B cell (primary cell): ENCODE measurements at regions of chr5 and their contacts with region 1.

Region 1: GRCh38 chr5:119411935-119412602 is 40.2 kb upstream of the HSD17B4 start:
- DNase-seq: peak; percentile 85
- ATAC-seq: peak; percentile 74
- H3K4me3 ChIP-seq: peak overlapping the region; percentile 50 to 79 (median 70)
- H3K4me3 Mint-ChIP-seq: peak overlapping the region; percentile 91
- H3K27ac ChIP-seq: peak overlapping the region; percentile 55 to 67
- H3K27ac Mint-ChIP-seq: peak overlapping the region; percentile 88
- H3K4me1 ChIP-seq: peaks cover 62 to 65% of the 10 kb centered on the region in 2 donors
- H3K4me1 Mint-ChIP-seq: peaks cover 75% of the 10 kb centered on the region
- H3K27me3 ChIP-seq: no peaks in the 10 kb centered on the region
- H3K27me3 Mint-ChIP-seq: no peaks in the 10 kb centered on the region
- CTCF ChIP-seq: peak; percentile 94

Region 2: DNA sequence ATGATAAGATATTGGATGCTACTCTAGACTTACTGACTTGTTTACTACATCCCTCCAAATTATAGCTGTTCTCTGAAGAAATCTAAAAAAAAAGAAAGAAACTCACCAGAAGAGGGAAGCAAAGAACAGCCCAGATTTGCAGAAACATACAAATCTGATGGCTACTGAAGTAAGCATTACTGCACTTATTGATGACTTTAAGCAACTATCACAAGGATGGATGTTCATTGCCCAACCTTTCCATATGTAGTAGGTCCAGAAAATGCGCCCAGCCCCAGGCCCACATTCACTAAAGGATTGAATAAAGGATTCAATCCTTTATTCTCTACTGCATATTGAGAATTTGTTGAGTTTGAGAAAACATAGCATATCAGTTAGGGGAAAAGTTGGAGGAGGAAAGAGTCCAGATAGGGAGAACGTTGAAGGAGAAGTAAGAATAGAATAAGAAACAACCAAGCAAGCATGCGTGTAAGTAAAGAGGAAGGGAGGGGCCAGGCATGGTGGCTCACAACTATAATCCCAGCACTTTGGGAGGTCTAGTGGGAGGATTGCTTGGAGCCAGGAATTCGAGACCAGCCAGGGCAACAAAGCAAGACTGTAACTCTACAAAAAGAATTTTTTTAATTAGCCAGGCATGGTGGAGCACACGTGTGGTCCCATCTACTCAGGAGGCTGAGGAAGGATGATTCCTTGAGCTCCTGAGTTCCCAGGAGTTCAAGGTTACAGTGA is 389.9 kb before region 1 on chr5:
- CTCF ChIA-PET with region 1: interaction called, 58 read pairs
- POLR2A ChIA-PET with region 1: no interaction called
- intact Hi-C with region 1: loop called (anchors 2 kb)
- DNase-seq: peak; percentile 68
- ATAC-seq: peak; percentile 62
- H3K4me3 ChIP-seq: peak overlapping the region in 1 of 5 experiments; percentile 7
- H3K4me3 Mint-ChIP-seq: peak overlapping the region; percentile 40
- H3K27ac ChIP-seq: peak overlapping the region; percentile 30 to 78
- H3K27ac Mint-ChIP-seq: peak overlapping the region; percentile 82
- H3K4me1 ChIP-seq: peaks cover 64 to 67% of the 10 kb centered on the region in 2 donors
- H3K4me1 Mint-ChIP-seq: peaks cover 65% of the 10 kb centered on the region
- H3K27me3 ChIP-seq: no peaks in the 10 kb centered on the region
- H3K27me3 Mint-ChIP-seq: no peaks in the 10 kb centered on the region
- CTCF ChIP-seq: peak; percentile 67

Region 3: GRCh38 chr5:119187776-119188529 is 224.1 kb before region 1 on chr5:
- CTCF ChIA-PET with region 1: no interaction called
- POLR2A ChIA-PET with region 1: no interaction called
- intact Hi-C with region 1: no loop called
- DNase-seq: peak; percentile 40
- ATAC-seq: no peak
- H3K4me3 ChIP-seq: peak overlapping the region in 3 of 5 experiments; percentile 22 to 37 (median 24)
- H3K4me3 Mint-ChIP-seq: peak overlapping the region; percentile 73
- H3K27ac ChIP-seq: peak overlapping the region; percentile 39 to 71
- H3K27ac Mint-ChIP-seq: peak overlapping the region; percentile 80
- H3K4me1 ChIP-seq: peaks cover 12 to 15% of the 10 kb centered on the region in 2 donors
- H3K4me1 Mint-ChIP-seq: peaks cover 26% of the 10 kb centered on the region
- H3K27me3 ChIP-seq: no peaks in the 10 kb centered on the region
- H3K27me3 Mint-ChIP-seq: no peaks in the 10 kb centered on the region
- CTCF ChIP-seq: no peak

Region 4: DNA sequence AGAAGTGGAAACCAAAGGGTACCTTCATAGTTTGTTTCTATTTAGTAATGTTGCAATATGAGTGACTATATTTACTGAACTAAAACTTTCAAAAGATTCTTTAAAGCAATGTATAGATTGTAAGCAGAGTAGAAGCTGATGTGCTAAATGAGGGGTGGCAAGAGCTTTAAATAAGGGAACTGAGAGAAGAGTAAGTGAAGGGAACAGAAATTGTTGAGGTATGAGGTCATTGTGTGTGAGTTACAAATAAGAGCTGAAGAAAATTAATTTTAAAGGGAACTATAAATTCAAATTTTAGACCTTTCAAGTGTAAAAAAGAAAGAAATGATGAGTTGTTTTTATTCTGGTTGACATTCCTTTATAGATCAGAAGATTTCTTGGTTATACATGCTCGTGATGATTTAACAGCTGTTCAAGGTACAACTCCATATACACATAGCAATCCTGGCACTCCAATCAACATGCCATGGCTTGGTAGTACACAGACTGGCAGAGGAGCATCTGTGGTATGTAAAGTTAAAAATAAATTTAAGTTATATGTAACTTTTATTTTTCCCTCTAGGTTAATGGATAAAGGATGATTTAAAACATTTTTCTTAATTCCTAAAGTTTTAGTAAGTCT is 191.4 kb before region 1 on chr5:
- CTCF ChIA-PET with region 1: interaction called, 13 read pairs
- POLR2A ChIA-PET with region 1: interaction called, 3 read pairs
- intact Hi-C with region 1: loop called (anchors 5 kb)
- DNase-seq: peak; percentile 63
- ATAC-seq: peak; percentile 92
- H3K4me3 ChIP-seq: no peak overlapping the region
- H3K4me3 Mint-ChIP-seq: peak overlapping the region; percentile 21
- H3K27ac ChIP-seq: peak overlapping the region; percentile 37 to 72
- H3K27ac Mint-ChIP-seq: peak overlapping the region; percentile 16
- H3K4me1 ChIP-seq: peaks cover 15 to 17% of the 10 kb centered on the region in 2 donors
- H3K4me1 Mint-ChIP-seq: peaks cover 21% of the 10 kb centered on the region
- H3K27me3 ChIP-seq: no peaks in the 10 kb centered on the region
- H3K27me3 Mint-ChIP-seq: no peaks in the 10 kb centered on the region
- CTCF ChIP-seq: no peak

Region 5: DNA sequence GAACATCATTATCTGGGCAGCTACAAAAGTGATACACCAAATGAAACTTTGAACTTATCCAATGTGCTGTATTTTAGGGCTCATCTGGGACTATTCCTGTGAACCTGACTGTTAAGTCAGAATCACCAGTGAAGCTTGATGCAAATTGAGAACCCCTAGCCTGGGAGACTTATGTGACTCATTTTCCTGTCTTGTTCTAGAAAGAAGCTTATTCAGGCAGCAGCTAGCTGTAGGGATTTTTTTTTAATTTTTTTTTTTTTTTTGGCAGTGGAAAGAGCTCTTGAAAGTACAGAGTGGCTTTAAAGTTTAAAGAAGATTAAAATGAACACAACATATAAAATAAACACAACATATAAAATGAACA is 137.3 kb before region 1 on chr5:
- CTCF ChIA-PET with region 1: interaction called, 79 read pairs
- POLR2A ChIA-PET with region 1: interaction called, 3 read pairs
- intact Hi-C with region 1: loop called (anchors 2 kb)
- DNase-seq: peak; percentile 52
- ATAC-seq: peak; percentile 42
- H3K4me3 ChIP-seq: peak overlapping the region in 1 of 5 experiments; percentile 43
- H3K4me3 Mint-ChIP-seq: peak overlapping the region; percentile 75
- H3K27ac ChIP-seq: peak overlapping the region; percentile 78 to 91
- H3K27ac Mint-ChIP-seq: peak overlapping the region; percentile 95
- H3K4me1 ChIP-seq: peaks cover 94 to 97% of the 10 kb centered on the region in 2 donors
- H3K4me1 Mint-ChIP-seq: peaks cover 97% of the 10 kb centered on the region
- H3K27me3 ChIP-seq: no peaks in the 10 kb centered on the region
- H3K27me3 Mint-ChIP-seq: no peaks in the 10 kb centered on the region
- CTCF ChIP-seq: no peak

Region 6: GRCh38 chr5:119328753-119329602 is 83.1 kb before region 1 on chr5:
- CTCF ChIA-PET with region 1: interaction called, 119 read pairs
- POLR2A ChIA-PET with region 1: no interaction called
- intact Hi-C with region 1: no loop called
- DNase-seq: no peak
- ATAC-seq: no peak
- H3K4me3 ChIP-seq: no peak overlapping the region
- H3K4me3 Mint-ChIP-seq: no peak overlapping the region
- H3K27ac ChIP-seq: peak overlapping the region in 1 of 2 donors; percentile 79
- H3K27ac Mint-ChIP-seq: peak overlapping the region; percentile 86
- H3K4me1 ChIP-seq: peaks cover 79 to 84% of the 10 kb centered on the region in 2 donors
- H3K4me1 Mint-ChIP-seq: peaks cover 88% of the 10 kb centered on the region
- H3K27me3 ChIP-seq: no peaks in the 10 kb centered on the region
- H3K27me3 Mint-ChIP-seq: no peaks in the 10 kb centered on the region
- CTCF ChIP-seq: no peak

Region 7: GRCh38 chr5:119355685-119356611 is 56.1 kb before region 1 on chr5 and contains the start of gene TNFAIP8:
- CTCF ChIA-PET with region 1: interaction called, 92 read pairs
- POLR2A ChIA-PET with region 1: no interaction called
- intact Hi-C with region 1: no loop called
- DNase-seq: peak; percentile 74
- ATAC-seq: peak; percentile 66
- H3K4me3 ChIP-seq: peak within 1 kb of the TSS; percentile 76 to 93 (median 89)
- H3K4me3 Mint-ChIP-seq: peak within 1 kb of the TSS; percentile 92
- H3K27ac ChIP-seq: peak within 1 kb of the TSS; percentile 78 to 91
- H3K27ac Mint-ChIP-seq: peak within 1 kb of the TSS; percentile 93
- H3K4me1 ChIP-seq: peaks cover 73 to 74% of the 10 kb centered on the region in 2 donors
- H3K4me1 Mint-ChIP-seq: peaks cover 87% of the 10 kb centered on the region
- H3K27me3 ChIP-seq: no peaks in the 10 kb centered on the region
- H3K27me3 Mint-ChIP-seq: no peaks in the 10 kb centered on the region
- CTCF ChIP-seq: no peak
- total RNA-seq, gene TNFAIP8: 105 and 109 TPM in 2 replicates

Region 8: GRCh38 chr5:119397518-119398380 is 14.3 kb before region 1 on chr5:
- CTCF ChIA-PET with region 1: interaction called, 49 read pairs
- POLR2A ChIA-PET with region 1: interaction called, 4 read pairs
- intact Hi-C with region 1: no loop called
- DNase-seq: no peak
- ATAC-seq: peak; percentile 15
- H3K4me3 ChIP-seq: no peak overlapping the region
- H3K4me3 Mint-ChIP-seq: peak overlapping the region; percentile 72
- H3K27ac ChIP-seq: peak overlapping the region; percentile 1 to 71
- H3K27ac Mint-ChIP-seq: peak overlapping the region; percentile 88
- H3K4me1 ChIP-seq: peaks cover 60 to 65% of the 10 kb centered on the region in 2 donors
- H3K4me1 Mint-ChIP-seq: peaks cover 83% of the 10 kb centered on the region
- H3K27me3 ChIP-seq: no peaks in the 10 kb centered on the region
- H3K27me3 Mint-ChIP-seq: no peaks in the 10 kb centered on the region
- CTCF ChIP-seq: no peak